ENCODE measurements at regions of chr21 and their contacts with region 1.

Region 1: GRCh38 chr21:45439161-45439872 is 34.4 kb downstream of the COL18A1 start:
- DNase-seq: peak; percentile 53 to 94 (median 85)

Region 2: GRCh38 chr21:45292399-45293219 is 146.7 kb before region 1 on chr21:
- intact Hi-C with region 1: loop called (anchors 2 kb)
- DNase-seq: peak; percentile 68 to 95 (median 88)